CD8-positive, alpha-beta T cell (primary cell): ENCODE measurements at regions of chr16 and their contacts with region 1.

Region 1: DNA sequence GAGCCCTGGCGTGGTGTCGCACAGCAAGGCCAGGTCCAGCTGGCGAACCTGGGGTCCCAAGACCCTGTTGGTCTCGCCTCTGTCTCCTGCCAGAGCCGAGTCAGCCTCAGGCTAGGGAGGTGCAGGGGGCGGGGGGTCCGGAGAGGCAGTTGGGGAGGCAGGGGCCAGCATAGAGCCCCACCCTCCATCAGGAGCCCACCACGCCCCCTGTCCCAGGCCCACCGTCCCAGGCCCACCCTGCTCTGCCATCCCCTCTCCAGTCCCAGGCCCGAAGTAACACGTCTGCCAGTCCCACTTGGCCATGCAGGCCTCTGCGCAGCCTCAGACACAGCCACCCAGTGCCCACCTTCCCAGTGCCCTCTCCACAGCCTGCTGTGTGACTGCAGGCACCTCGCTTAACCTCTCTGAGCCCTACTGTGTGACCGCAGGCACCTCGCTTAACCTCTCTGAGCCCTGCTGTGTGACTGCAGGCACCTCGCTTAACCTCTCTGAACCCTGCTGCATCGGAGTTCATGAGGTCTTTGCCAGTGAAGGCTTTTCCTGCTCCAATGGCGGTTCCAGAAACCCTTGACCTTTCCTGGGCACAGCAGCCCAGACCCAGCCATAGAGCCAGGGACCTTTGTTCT is 29.3 kb downstream of the ZNF469 start:
- DNase-seq: no peak
- ATAC-seq: no peak
- H3K4me3 ChIP-seq: no peak overlapping the region
- H3K4me3 Mint-ChIP-seq: no peak overlapping the region
- H3K27ac ChIP-seq: no peak overlapping the region
- H3K27ac Mint-ChIP-seq: no peak overlapping the region
- H3K4me1 ChIP-seq: peaks cover 5% of the 10 kb centered on the region
- H3K4me1 Mint-ChIP-seq: peaks cover 5% of the 10 kb centered on the region
- H3K27me3 ChIP-seq: no peaks in the 10 kb centered on the region
- H3K27me3 Mint-ChIP-seq: no peaks in the 10 kb centered on the region
- CTCF ChIP-seq: no peak

Region 2: DNA sequence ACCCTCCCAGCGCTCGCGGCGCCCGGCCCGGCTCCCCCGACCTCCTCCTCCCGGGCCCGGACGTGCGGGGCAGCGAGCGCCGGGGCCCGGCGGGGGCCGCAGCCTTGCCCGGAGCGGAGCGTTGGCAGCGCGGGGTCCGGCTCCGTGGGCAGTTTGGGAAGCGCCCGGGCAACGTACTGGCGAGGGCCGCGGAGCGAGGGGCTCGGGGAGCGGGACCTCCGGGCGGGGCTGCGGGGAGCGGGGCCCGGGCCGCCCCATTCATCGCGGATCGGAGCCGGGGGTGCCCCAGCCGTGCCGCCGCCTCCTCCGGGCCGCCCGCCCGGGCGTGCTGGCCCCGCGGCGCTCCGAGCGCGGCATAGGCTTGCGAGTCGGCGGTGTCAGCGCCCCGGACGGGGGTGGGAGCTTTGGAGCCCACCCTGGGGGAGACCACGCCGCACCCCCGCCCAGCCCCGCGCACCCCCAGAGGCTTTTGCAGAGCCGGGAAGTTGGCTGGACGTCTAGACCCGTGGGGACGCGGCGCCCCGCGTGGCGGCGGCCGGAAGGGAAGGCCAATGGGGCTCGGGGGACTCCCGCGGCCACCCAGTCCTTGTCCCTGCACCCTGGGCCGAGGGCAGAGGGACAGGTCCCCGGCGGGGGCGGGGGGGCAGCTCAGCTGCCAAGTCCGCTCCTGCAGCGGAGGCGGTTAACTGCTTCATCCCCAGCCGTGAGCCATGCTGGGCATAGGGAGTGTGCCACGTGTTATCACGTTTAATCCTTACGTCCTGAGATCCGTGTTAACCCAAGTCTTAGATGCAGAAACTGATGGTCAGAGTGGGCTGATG is 28.5 kb before region 1 on chr16:
- CTCF ChIA-PET with region 1: no interaction called
- POLR2A ChIA-PET with region 1: no interaction called
- intact Hi-C with region 1: loop called in 1 of 2 experiments (anchors 2 kb)
- DNase-seq: no peak
- ATAC-seq: no peak
- H3K4me3 ChIP-seq: no peak overlapping the region
- H3K4me3 Mint-ChIP-seq: no peak overlapping the region
- H3K27ac ChIP-seq: no peak overlapping the region
- H3K27ac Mint-ChIP-seq: no peak overlapping the region
- H3K4me1 ChIP-seq: peaks cover 5% of the 10 kb centered on the region
- H3K4me1 Mint-ChIP-seq: peaks cover 9% of the 10 kb centered on the region
- H3K27me3 ChIP-seq: peaks cover 7 to 10% of the 10 kb centered on the region in 2 experiments
- H3K27me3 Mint-ChIP-seq: peaks cover 33% of the 10 kb centered on the region
- CTCF ChIP-seq: no peak